Keratinocyte (primary cell): ENCODE measurements at regions of chr6 and their contacts with region 1.

Region 1: GRCh38 chr6:11050731-11051130 is 6.6 kb upstream of the ELOVL2 start:
- DNase-seq: no peak
- H3K4me3 ChIP-seq: no peak overlapping the region
- H3K27ac ChIP-seq: no peak overlapping the region
- H3K4me1 ChIP-seq: no peaks in the 10 kb centered on the region
- H3K27me3 ChIP-seq: peaks cover 2% of the 10 kb centered on the region
- CTCF ChIP-seq: no peak

Region 2: GRCh38 chr6:10954590-10955010 is 96.1 kb before region 1 on chr6:
- dilution Hi-C with region 1: loop called (anchors 25 kb)
- DNase-seq: peak; percentile 26
- H3K4me3 ChIP-seq: no peak overlapping the region
- H3K27ac ChIP-seq: no peak overlapping the region
- H3K4me1 ChIP-seq: no peaks in the 10 kb centered on the region
- H3K27me3 ChIP-seq: no peaks in the 10 kb centered on the region
- CTCF ChIP-seq: peak; percentile 95 to 99 (median 98)